ENCODE measurements at regions of chr13 and their contacts with region 1.

Region 1: DNA sequence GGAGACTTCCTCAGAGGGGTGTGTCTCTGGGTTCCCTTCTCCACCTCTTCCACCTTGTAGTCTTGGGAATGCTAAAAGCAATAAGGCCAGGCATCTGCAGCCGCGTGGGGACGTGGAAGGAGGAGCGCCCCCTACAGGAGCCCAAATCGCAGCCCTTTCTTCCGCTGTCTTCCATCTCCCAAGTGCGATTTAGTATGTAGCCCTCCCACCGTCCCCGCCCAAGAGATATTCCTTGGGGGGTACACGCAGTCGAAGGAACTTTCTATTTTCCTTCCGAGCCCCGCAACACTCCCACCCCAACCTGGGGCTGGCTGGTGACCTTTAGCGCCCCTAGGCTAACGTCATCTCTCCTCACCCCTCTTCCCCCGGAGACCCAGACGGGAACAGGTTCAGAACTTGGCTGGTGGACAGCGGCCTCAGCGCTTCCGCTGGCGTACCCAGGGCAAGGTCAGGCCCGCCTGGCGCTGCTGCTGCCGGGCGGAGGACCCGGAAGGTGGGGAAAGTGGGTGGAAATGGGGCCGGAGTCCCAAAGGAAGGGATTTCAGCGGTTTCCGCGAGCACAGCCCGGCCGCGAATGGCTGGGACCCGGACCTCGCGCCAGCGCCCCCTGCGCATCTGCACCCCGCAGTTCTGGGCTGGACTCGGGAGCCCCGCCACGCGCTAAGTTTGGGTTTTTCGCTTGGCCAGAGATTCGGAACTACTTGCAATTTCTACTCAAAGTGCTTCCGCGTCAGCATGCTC is 2.1 kb upstream of the PCDH8 start:
- DNase-seq: peak; percentile 72 to 94
- H3K4me3 ChIP-seq: peak overlapping the region; percentile 69 to 84 (median 74)
- H3K27ac ChIP-seq: peak overlapping the region; percentile 77; the same call in 1 of the 2 replicates
- H3K4me1 ChIP-seq: peaks cover 4 to 35% (median 25%) of the 10 kb centered on the region in 4 experiments
- H3K27me3 ChIP-seq: peaks cover 39 to 49% (median 45%) of the 10 kb centered on the region in 4 experiments
- CTCF ChIP-seq: peak in 2 of 3 experiments; percentile 70 to 86; a peak in 3 of 4 replicates
- EP300 ChIP-seq: no peak
- POLR2A ChIP-seq: no peak; a peak in 1 of 3 replicates
- RAD21 ChIP-seq: peak; percentile 25 to 42; a peak in 3 of 4 replicates

Region 2: GRCh38 chr13:52194184-52194868 is 656.2 kb before region 1 on chr13:
- CTCF ChIA-PET with region 1: no interaction called
- POLR2A ChIA-PET with region 1: no interaction called
- DNase-seq: peak; percentile 41 to 97
- H3K4me3 ChIP-seq: peak overlapping the region; percentile 74 to 100 (median 96)
- H3K27ac ChIP-seq: no peak overlapping the region
- H3K4me1 ChIP-seq: peaks cover 0 to 3% (median 0%) of the 10 kb centered on the region in 4 experiments; a peak in 2 of 7 replicates
- H3K27me3 ChIP-seq: no peaks in the 10 kb centered on the region
- CTCF ChIP-seq: no peak
- EP300 ChIP-seq: peak in 1 of 2 experiments; percentile 8; a peak in 1 of 3 replicates
- POLR2A ChIP-seq: peak; percentile 78 to 91
- RAD21 ChIP-seq: peak in 1 of 2 experiments; percentile 9; a peak in 2 of 4 replicates

Region 3: DNA sequence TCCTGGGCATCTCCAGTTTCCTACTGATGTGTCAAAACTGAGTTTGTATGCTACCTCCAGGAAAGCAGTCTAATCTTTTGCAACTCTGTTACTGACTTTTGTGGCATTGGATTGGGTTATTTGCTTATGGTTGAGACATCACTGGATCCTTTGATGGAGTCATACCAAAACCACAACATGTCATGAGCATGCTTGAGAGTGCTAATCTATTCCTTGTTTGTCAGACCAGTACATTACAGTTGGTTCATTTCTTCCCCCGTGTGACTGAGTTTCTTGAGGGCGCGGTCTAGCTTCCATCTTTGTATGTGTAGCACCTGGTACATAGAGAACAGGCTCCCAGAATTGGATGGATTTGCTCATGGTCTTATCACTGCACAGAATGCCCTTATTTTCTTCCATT is 154.7 kb before region 1 on chr13:
- CTCF ChIA-PET with region 1: interaction called, 20 read pairs
- POLR2A ChIA-PET with region 1: interaction called, 4 read pairs
- DNase-seq: no peak
- H3K4me3 ChIP-seq: no peak overlapping the region
- H3K27ac ChIP-seq: no peak overlapping the region
- H3K4me1 ChIP-seq: no peaks in the 10 kb centered on the region
- H3K27me3 ChIP-seq: no peaks in the 10 kb centered on the region
- CTCF ChIP-seq: no peak
- EP300 ChIP-seq: no peak
- POLR2A ChIP-seq: no peak
- RAD21 ChIP-seq: no peak

Region 4: DNA sequence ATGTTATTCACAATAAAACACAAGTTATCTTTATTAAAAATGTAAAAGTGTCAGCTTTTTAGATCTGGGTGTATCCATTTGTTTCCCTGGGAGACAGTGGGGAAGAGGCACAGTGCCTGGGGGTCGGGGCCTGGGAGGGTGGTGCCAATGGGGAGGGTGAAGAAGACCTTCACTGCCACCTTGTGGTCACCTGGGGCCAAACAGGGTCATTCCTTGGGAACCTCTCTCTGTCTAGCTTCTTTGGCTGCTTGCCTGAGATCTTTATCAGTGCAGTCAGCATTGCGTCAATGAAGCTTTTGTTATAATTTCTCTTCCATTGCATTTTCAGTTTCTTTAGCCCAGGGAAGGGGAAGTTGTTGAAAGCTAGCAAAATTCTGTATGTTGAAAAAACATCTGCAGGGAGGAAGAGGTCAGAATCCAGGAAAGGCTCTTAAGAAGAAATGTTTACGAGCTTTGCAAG is 41.2 kb before region 1 on chr13:
- CTCF ChIA-PET with region 1: interaction called, 32 read pairs
- POLR2A ChIA-PET with region 1: interaction called, 3 read pairs
- DNase-seq: peak; percentile 61 to 88
- H3K4me3 ChIP-seq: no peak overlapping the region
- H3K27ac ChIP-seq: no peak overlapping the region
- H3K4me1 ChIP-seq: peaks cover 0 to 6% (median 4%) of the 10 kb centered on the region in 4 experiments; a peak in 4 of 7 replicates
- H3K27me3 ChIP-seq: no peaks in the 10 kb centered on the region
- CTCF ChIP-seq: peak; percentile 85 to 91 (median 86)
- EP300 ChIP-seq: no peak
- POLR2A ChIP-seq: no peak
- RAD21 ChIP-seq: peak; percentile 96 to 97

Region 5: GRCh38 chr13:52838433-52839107 is 12.0 kb before region 1 on chr13:
- CTCF ChIA-PET with region 1: interaction called, 43 read pairs
- POLR2A ChIA-PET with region 1: interaction called, 4 read pairs
- DNase-seq: no peak
- H3K4me3 ChIP-seq: no peak overlapping the region
- H3K27ac ChIP-seq: no peak overlapping the region
- H3K4me1 ChIP-seq: peaks cover 0 to 5% (median 2%) of the 10 kb centered on the region in 4 experiments; a peak in 4 of 7 replicates
- H3K27me3 ChIP-seq: peaks cover 0 to 2% (median 0%) of the 10 kb centered on the region in 4 experiments; a peak in 1 of 7 replicates
- CTCF ChIP-seq: no peak
- EP300 ChIP-seq: no peak
- POLR2A ChIP-seq: no peak
- RAD21 ChIP-seq: no peak

Region 6: GRCh38 chr13:52879950-52880741 is 29.6 kb after region 1 on chr13:
- CTCF ChIA-PET with region 1: interaction called, 177 read pairs
- POLR2A ChIA-PET with region 1: interaction called, 5 read pairs
- DNase-seq: peak in 1 of 2 experiments; percentile 29
- H3K4me3 ChIP-seq: peak overlapping the region in 1 of 4 experiments; percentile 44; a peak in 2 of 8 replicates
- H3K27ac ChIP-seq: no peak overlapping the region
- H3K4me1 ChIP-seq: peaks cover 8 to 25% (median 21%) of the 10 kb centered on the region in 4 experiments
- H3K27me3 ChIP-seq: peaks cover 6 to 27% (median 23%) of the 10 kb centered on the region in 4 experiments
- CTCF ChIP-seq: no peak
- EP300 ChIP-seq: peak in 1 of 2 experiments; percentile 89; a peak in 1 of 3 replicates
- POLR2A ChIP-seq: no peak
- RAD21 ChIP-seq: no peak

Region 7: DNA sequence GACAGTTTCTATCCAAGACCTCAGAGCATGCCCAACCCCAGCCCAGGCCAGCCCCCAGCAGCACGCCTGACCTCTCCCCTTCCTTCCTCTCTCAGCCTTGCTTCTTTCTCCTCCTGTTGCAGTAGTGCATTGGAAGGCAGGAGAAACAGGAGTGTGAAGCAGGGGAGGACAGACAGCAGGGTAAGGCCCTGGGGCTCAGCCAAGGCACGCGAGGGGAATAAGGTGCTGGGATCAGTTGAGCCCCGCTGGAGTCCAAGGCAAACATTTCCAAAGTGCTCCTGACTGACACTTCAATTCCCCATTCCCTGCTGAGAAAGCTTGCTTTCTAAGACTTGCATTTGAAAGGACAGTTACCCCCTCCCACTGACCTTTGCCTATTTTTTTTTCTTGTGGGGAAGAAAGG is 104.9 kb after region 1 on chr13:
- CTCF ChIA-PET with region 1: interaction called, 45 read pairs
- POLR2A ChIA-PET with region 1: interaction called, 7 read pairs
- DNase-seq: peak; percentile 46 to 66
- H3K4me3 ChIP-seq: peak overlapping the region in 1 of 4 experiments; percentile 46; a peak in 3 of 8 replicates
- H3K27ac ChIP-seq: no peak overlapping the region
- H3K4me1 ChIP-seq: peaks cover 7 to 23% (median 16%) of the 10 kb centered on the region in 4 experiments; a peak in 6 of 7 replicates
- H3K27me3 ChIP-seq: peaks cover 0 to 2% (median 0%) of the 10 kb centered on the region in 4 experiments; a peak in 3 of 7 replicates
- CTCF ChIP-seq: no peak
- EP300 ChIP-seq: peak in 1 of 2 experiments; percentile 41; a peak in 1 of 3 replicates
- POLR2A ChIP-seq: no peak
- RAD21 ChIP-seq: 0 out of 4 replicates have a peak, but pooled peaks of 1 of the 2 experiments have one; percentile 2

Region 8: DNA sequence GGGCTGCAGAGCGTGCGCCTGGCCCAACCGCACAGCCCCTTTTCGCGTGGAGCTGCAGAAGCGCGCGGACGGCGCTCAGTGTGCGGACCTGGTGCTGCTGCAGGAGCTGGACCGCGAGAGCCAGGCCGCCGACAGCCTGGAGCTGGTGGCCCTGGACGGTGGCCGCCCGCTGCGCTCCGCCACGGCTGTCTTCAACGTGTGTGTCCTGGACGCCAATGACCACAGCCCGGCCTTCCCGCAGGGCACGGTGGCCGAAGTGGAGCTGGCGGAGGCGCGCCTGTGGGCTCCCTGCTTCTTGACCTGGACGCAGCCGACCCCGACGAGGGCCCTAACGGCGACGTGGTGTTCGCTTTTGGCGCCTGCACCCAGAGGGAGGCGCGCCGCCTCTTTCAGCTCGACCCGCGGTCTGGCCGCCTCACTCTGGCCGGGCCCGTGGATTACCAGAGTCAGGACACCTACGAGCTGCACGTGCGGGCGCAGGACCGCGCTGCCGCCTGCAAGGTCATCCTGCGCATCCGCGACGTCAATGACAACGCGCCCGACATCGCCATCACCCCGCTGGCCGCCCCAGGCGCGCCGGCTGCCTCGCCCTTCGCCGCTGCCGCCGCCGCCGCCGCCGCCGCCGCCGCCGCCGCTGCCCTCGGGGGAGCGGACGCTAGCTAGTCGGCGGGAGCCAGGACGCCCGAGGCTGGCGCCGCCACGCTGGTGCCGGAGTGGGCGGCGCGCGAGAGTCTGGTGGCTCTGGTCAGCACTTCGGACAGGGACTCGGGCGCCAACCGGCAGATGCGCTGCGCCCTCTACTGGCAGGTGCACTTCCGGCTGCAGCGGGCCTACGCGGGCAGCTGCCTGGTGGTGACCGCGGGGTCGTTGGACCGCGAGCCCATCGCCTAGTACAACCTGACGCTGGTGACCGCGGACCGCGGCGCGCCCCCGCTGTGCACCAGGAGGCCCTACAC is 350.2 kb after region 1 on chr13:
- CTCF ChIA-PET with region 1: interaction called, 82 read pairs
- POLR2A ChIA-PET with region 1: interaction called, 20 read pairs
- DNase-seq: peak; percentile 62 to 92
- H3K4me3 ChIP-seq: peak overlapping the region; percentile 34 to 59 (median 40)
- H3K27ac ChIP-seq: no peak overlapping the region
- H3K4me1 ChIP-seq: peaks cover 0 to 7% (median 4%) of the 10 kb centered on the region in 4 experiments; a peak in 4 of 7 replicates
- H3K27me3 ChIP-seq: peaks cover 20 to 33% (median 32%) of the 10 kb centered on the region in 4 experiments
- CTCF ChIP-seq: peak; percentile 92 to 99 (median 93)
- EP300 ChIP-seq: peak in 1 of 2 experiments; percentile 58; a peak in 1 of 3 replicates
- POLR2A ChIP-seq: no peak
- RAD21 ChIP-seq: peak; percentile 68 to 76

Measured in H1 (cell line).